ENCODE measurements at regions of chr21 and their contacts with region 1.

Region 1: DNA sequence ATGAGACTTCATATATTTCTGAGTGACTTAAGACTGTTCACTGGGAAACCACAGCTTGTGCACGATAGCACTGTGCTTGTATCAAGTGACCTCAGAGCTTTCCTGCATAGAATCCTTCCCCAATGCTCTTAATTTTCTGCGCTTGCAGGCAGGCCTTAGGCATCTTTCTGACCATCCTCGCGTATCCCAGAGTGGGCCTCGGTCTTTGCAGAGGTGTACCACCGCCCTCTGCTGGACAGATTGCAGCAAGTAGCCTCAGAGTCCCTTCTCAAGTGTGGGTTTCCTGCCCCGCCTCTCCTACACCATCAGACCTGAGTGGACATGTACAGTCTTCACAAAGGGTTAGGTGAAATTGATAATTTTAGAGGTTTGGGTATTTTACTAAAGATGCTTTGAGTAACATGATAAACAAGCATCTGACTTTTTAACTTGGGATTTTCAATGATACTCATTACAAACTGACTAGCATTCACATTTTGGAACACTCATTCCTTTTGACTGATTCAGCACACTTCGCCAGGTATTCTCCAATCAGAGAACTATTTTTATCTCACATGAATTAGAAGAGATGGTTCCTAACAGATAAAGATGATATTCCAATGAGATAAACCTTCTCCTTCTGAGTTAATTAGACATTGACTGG is 246.5 kb upstream of the USP25 start:
- DNase-seq: peak; percentile 89
- H3K4me3 Mint-ChIP-seq: no peak overlapping the region
- H3K27ac Mint-ChIP-seq: no peak overlapping the region
- H3K4me1 Mint-ChIP-seq: peaks cover 27% of the 10 kb centered on the region
- H3K27me3 Mint-ChIP-seq: no peaks in the 10 kb centered on the region

Region 2: DNA sequence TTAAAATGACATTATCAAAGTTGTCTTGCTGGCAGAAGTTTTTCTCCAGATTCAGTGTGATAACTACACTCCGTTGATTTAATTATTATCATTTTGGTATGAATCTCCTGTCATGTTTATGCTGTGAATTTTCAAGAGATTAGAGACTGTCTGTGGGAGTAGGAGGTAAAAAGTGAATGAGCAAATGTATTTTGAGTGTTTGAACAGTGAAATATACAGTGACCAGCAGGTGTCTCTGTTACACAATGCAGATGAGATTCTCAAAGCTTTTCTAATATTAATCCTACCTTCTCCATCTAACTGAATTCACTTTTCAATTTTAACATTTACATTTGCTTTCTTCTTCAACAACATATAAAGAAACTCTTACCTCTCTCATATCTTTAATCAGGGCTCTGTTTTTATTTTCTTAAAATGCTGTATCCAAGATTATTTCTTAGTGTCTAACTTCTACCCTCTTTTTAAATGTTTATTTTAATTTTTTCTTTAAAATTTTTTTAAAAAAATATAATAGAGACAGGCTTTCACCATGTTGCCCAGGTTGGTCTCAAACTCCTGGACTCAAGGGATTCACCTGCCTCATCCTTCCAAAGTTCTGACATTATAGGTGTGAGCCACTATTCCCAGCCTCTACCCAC is 1079.5 kb before region 1 on chr21:
- CTCF ChIA-PET with region 1: no interaction called
- intact Hi-C with region 1: loop called (anchors 5 kb)
- DNase-seq: peak; percentile 9
- H3K4me3 Mint-ChIP-seq: no peak overlapping the region
- H3K27ac Mint-ChIP-seq: no peak overlapping the region
- H3K4me1 Mint-ChIP-seq: no peaks in the 10 kb centered on the region
- H3K27me3 Mint-ChIP-seq: no peaks in the 10 kb centered on the region

Region 3: DNA sequence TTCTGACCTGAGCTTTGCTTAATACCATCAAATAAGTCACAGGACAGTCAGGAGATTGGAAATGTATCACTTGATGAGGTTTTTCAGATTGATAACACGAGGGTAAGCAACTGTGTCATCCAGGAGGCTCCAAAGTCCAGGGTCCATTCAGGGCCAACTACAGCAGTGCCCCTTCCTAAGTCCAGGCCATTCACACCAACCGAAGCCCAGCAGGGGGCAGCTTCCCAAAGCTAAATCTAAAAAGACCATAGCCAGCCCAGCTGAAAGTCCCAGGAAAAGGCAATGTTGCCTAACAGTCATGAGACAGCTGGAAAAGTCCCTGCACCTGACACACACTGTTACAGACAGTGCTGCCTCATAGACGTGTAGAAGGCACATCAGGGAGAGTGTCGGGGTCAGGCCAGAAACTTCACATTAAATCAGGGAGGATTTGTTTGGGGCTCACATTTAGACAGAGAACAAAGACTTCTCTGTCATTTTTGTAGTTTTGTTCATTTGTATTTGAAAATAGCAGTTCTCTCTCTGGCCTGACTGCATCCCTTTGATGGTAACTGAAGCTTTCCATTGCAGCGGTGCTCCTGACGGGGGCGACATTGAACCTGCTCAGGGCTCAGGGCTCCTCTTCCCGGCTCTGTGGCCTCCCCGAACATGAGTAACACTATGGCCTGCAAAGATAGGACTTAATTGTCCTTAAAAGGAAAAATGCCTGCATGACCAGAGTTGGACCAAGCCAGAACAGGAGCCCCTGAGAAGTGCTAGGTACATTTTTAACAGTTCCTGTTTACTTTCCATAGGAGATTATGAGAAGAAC is 618.8 kb before region 1 on chr21:
- CTCF ChIA-PET with region 1: interaction called, 22 read pairs
- intact Hi-C with region 1: loop called (anchors 1 kb)
- DNase-seq: peak; percentile 74
- H3K4me3 Mint-ChIP-seq: no peak overlapping the region
- H3K27ac Mint-ChIP-seq: no peak overlapping the region
- H3K4me1 Mint-ChIP-seq: peaks cover 10% of the 10 kb centered on the region
- H3K27me3 Mint-ChIP-seq: peaks cover 2% of the 10 kb centered on the region

Region 4: DNA sequence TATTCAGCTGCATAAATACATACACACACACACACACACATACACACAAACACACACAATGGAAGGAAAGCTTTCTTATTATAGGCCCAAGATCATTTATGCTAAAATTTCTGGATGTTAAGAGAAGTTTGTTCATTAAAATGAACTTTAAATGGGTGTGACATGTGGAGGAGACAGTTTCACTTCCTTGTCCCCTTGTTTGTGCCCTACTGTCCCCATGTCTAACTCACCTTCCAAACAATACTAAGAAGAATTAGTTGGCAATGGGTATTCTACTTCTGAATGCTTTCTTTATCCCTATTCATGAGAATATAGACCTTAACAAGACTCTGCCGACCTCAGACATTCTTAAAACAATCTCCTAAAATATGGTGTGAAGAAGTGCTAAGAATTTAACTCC is 355.0 kb before region 1 on chr21:
- CTCF ChIA-PET with region 1: interaction called, 3 read pairs
- intact Hi-C with region 1: loop called (anchors 2 kb)
- DNase-seq: no peak
- H3K4me3 Mint-ChIP-seq: no peak overlapping the region
- H3K27ac Mint-ChIP-seq: no peak overlapping the region
- H3K4me1 Mint-ChIP-seq: peaks cover 6% of the 10 kb centered on the region
- H3K27me3 Mint-ChIP-seq: no peaks in the 10 kb centered on the region

Region 5: GRCh38 chr21:15422783-15423182 is 60.5 kb before region 1 on chr21:
- CTCF ChIA-PET with region 1: interaction called, 4 read pairs
- intact Hi-C with region 1: loop called (anchors 2 kb)
- DNase-seq: peak; percentile 12
- H3K4me3 Mint-ChIP-seq: no peak overlapping the region
- H3K27ac Mint-ChIP-seq: peak overlapping the region; percentile 14
- H3K4me1 Mint-ChIP-seq: peaks cover 39% of the 10 kb centered on the region
- H3K27me3 Mint-ChIP-seq: peaks cover 5% of the 10 kb centered on the region

Region 6: DNA sequence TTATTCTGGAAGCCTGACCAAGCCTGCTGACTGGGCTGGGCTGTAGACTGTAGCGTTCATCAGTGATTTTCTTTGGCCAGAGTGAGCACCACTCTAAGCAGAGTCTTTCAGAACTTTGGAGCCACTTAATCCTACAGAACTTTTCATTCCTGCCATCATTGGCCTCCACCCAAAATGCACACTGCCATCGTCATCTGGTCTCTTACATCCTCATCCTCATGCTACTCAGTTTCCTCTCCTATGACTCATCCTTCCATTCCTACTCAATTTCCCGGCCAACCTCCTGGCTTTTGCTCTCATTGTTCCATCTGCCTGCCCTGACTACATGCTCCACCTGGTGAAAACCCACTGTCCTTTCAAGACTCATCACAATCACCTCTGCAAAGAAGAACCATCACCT is 12.7 kb after region 1 on chr21:
- CTCF ChIA-PET with region 1: interaction called, 13 read pairs
- intact Hi-C with region 1: no loop called
- DNase-seq: no peak
- H3K4me3 Mint-ChIP-seq: no peak overlapping the region
- H3K27ac Mint-ChIP-seq: no peak overlapping the region
- H3K4me1 Mint-ChIP-seq: peaks cover 2% of the 10 kb centered on the region
- H3K27me3 Mint-ChIP-seq: no peaks in the 10 kb centered on the region